ENCODE measurements at regions of chr3 and their contacts with region 1.

Region 1: DNA sequence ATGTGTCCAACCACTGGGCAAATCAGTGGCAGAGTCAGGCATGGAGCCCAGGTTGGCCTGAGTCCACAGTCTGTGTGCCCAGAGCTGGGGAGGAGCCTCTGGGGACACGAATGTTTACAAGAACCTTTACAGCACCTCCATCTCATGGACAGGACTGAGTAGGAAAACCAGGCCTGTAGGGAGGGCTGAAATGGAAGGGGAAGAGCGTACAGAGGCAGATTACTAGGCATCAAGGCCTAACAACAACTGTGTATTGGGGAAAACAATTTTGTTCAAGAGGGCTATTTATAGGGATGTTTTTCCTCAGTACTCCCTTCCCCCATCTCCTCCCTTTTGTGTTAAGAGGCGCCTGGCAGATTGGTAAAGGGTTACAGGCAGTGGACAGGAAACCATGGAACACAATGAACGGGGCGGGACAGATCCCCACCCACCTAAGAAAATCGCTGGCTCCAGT is 15.1 kb upstream of the ARHGAP31 start:
- DNase-seq: peak; percentile 74 to 78
- ATAC-seq: peak; percentile 89 to 96 (median 93)
- H3K4me3 ChIP-seq: peak overlapping the region in 3 of 10 donors; percentile 2 to 20 (median 10)
- H3K27ac ChIP-seq: peak overlapping the region; percentile 74 to 94 (median 89)
- H3K4me1 ChIP-seq: peaks cover 5 to 58% (median 23%) of the 10 kb centered on the region in 9 donors
- H3K27me3 ChIP-seq: no peaks in the 10 kb centered on the region
- CTCF ChIP-seq: no peak

Region 2: DNA sequence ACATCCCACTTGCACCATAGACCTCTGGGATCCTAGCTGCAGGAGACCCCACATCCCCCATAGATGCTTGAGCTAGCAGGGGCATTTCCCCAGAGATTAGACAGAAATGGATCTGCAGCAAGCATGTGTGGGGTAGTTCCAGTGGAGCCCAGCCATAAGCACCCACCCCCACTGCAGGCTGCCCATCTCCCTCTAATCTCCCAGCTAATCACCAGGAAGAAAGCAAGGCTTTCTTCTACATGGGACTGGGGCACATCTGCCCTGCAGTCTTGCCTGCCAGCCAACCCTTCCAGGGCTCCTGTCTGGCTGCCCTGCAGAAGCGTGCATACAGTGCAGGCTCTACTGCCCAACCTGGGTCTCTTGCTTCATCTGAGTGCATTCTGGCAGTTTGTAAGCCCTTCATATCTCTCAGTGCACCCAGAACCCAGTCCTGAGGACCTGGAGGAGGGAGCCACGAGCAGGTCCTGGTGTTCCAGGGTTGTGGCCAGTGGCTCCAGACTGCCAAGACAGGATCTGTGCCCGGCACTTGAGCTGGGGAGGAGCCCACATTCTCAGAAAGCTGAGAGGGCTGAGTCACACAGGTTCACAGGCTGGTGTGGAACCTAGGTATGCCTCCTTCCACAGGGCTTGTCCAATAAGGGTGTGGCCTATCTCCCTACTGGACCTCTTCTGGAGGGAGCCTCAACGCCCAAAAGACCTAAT is 194.6 kb before region 1 on chr3:
- intact Hi-C with region 1: no loop called
- DNase-seq: no peak
- ATAC-seq: no peak
- H3K4me3 ChIP-seq: no peak overlapping the region
- H3K27ac ChIP-seq: no peak overlapping the region
- H3K4me1 ChIP-seq: no peaks in the 10 kb centered on the region
- H3K27me3 ChIP-seq: no peaks in the 10 kb centered on the region
- CTCF ChIP-seq: no peak

Region 3: DNA sequence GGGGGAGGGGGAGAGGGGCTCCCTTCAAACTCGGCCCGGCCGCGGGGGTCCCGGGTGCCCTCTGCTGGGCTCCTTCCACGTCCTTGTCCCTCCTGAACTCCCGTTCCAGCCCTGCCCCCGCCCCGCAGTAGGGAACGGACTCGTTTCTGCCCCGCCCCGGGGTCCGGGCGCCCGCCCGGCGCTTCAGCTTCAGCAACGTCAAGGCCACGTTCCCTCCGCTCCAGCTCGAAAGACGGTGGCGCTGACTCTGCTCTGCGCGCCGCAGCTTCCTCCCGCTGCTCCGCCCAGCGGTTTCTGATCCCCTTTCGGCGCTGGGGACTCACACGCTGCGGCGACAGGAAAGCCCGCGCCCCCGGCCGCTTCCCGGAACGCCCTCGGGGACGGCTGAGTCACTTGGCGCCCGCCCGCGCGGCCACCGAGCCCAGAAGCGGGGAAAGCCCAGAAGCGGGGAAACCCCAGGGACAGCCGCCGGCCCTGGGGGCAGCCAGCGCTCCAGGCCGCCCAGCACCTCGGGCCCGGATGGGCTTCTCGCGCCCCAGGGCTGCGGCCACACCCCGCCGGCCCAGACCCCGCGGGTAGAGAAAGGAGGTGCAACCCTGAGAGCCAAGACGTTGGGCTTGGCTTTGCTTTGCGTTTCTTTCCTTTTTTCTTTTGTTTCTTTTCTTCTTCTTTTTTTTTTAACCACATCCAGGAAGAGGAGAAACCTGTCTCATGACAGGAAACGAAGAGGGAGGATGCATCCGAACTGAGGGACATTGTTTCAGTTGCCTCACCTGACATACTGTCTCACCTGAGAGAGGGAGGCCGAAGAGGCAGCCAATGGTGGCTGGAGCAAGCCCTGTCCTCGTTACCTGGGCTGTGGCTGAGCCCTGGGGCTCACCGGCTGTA is 44.0 kb after region 1 on chr3:
- intact Hi-C with region 1: loop called in 2 of 10 experiments (anchors 2 to 5 kb)
- DNase-seq: peak; percentile 89 to 90
- ATAC-seq: peak; percentile 92 to 96 (median 94)
- H3K4me3 ChIP-seq: peak overlapping the region; percentile 1 to 71 (median 62)
- H3K27ac ChIP-seq: peak overlapping the region; percentile 46 to 97 (median 94)
- H3K4me1 ChIP-seq: peaks cover 2 to 98% (median 62%) of the 10 kb centered on the region in 9 donors
- H3K27me3 ChIP-seq: no peaks in the 10 kb centered on the region
- CTCF ChIP-seq: peak in 5 of 9 donors; percentile 3 to 54 (median 42)

Region 4: DNA sequence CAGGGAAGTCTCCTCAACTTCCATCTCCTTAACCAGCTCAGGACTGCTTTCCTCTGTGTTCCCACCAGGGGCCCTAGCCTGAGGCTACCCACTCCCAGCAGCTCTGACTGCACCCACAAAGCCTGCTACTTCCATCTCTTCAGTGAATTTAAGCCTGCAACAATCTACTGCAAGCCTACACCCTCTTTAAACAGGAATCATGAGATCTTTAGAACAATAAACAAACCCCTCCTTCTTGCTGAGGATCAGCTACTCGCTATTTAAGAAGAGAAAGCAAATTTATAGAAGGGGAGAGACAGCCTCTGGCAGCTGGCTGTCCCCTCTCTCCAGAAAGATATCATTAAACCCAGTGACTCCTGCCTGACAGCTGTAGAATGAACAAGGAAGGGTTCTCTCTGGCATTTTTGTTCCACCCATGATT is 67.0 kb after region 1 on chr3:
- intact Hi-C with region 1: loop called in 7 of 10 experiments (anchors 2 to 10 kb)
- DNase-seq: no peak
- ATAC-seq: no peak
- H3K4me3 ChIP-seq: no peak overlapping the region
- H3K27ac ChIP-seq: peak overlapping the region in 4 of 10 donors; percentile 8 to 86 (median 32)
- H3K4me1 ChIP-seq: peaks cover 6 to 88% (median 61%) of the 10 kb centered on the region in 9 donors
- H3K27me3 ChIP-seq: no peaks in the 10 kb centered on the region
- CTCF ChIP-seq: no peak

Region 5: GRCh38 chr3:119395923-119396358 is 116.8 kb after region 1 on chr3:
- intact Hi-C with region 1: loop called in 1 of 10 experiments (anchors 10 kb)
- DNase-seq: no peak
- ATAC-seq: no peak
- H3K4me3 ChIP-seq: no peak overlapping the region
- H3K27ac ChIP-seq: no peak overlapping the region
- H3K4me1 ChIP-seq: peaks cover 0 to 5% (median 0%) of the 10 kb centered on the region in 9 donors
- H3K27me3 ChIP-seq: no peaks in the 10 kb centered on the region
- CTCF ChIP-seq: no peak

Region 6: GRCh38 chr3:119469381-119470189 is 190.5 kb after region 1 on chr3:
- intact Hi-C with region 1: loop called in 7 of 10 experiments (anchors 5 to 10 kb)
- DNase-seq: no peak
- ATAC-seq: peak in 4 of 8 donors; percentile 2 to 20 (median 10)
- H3K4me3 ChIP-seq: peak overlapping the region; percentile 79 to 100 (median 88)
- H3K27ac ChIP-seq: peak overlapping the region; percentile 67 to 93 (median 84)
- H3K4me1 ChIP-seq: peaks cover 0 to 23% (median 13%) of the 10 kb centered on the region in 9 donors
- H3K27me3 ChIP-seq: no peaks in the 10 kb centered on the region
- CTCF ChIP-seq: no peak